HepG2 (cell line): ENCODE measurements at regions of chr9 and their contacts with region 1.

Region 1: DNA sequence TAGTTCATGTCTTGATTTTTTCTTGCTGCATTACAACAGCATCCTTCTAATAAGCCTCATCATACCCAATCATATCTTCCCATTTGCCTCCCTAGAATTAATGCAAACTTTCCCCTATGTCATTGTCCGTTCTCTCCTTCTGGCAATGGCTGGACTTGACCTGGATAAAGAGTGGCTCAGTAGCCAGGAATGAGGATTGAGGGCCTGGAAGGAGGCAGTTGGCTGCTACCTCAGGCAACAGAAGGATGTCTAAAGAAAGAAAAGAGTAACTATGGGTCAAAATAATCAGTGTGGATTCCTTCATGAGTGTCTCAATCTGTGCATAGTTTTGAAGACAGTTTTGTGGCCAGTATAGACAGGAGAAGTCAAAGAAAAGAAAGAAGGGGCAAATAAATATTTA is 209.6 kb downstream of the TRPM3 start:
- DNase-seq: no peak
- ATAC-seq: no peak
- H3K4me3 ChIP-seq: no peak overlapping the region
- H3K27ac ChIP-seq: no peak overlapping the region
- H3K4me1 ChIP-seq: no peaks in the 10 kb centered on the region
- H3K27me3 ChIP-seq: no peaks in the 10 kb centered on the region; a peak in 1 of 5 replicates
- CTCF ChIP-seq: no peak
- EP300 ChIP-seq: no peak
- POLR2A ChIP-seq: no peak
- RAD21 ChIP-seq: no peak

Region 2: GRCh38 chr9:70979966-70980365 is 68.2 kb after region 1 on chr9:
- CTCF ChIA-PET with region 1: no interaction called
- POLR2A ChIA-PET with region 1: no interaction called
- in situ Hi-C with region 1: loop called (anchors 10 kb)
- intact Hi-C with region 1: no loop called
- DNase-seq: no peak
- ATAC-seq: no peak
- H3K4me3 ChIP-seq: no peak overlapping the region
- H3K27ac ChIP-seq: no peak overlapping the region
- H3K4me1 ChIP-seq: no peaks in the 10 kb centered on the region
- H3K27me3 ChIP-seq: no peaks in the 10 kb centered on the region
- CTCF ChIP-seq: no peak
- EP300 ChIP-seq: no peak
- POLR2A ChIP-seq: no peak
- RAD21 ChIP-seq: no peak

Region 3: DNA sequence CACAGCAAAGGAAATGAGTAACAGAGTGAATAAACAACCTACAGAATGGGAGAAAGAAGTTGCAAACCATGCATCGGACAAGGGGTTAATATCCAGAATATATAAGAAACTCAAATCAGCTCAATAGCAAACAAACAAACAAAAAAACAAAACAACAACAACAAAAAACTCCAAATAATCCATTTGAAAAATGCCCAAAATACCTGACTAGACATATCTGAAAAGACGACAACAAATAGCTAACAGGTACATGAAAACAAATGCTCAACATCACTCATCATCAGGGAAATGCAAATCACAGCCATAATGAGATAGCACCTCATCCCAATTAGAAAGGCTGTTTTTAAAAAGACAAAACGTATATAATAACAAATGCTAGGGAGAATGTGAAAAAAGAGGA is 98.5 kb after region 1 on chr9:
- CTCF ChIA-PET with region 1: no interaction called
- POLR2A ChIA-PET with region 1: no interaction called
- in situ Hi-C with region 1: no loop called
- intact Hi-C with region 1: no loop called
- DNase-seq: no peak
- ATAC-seq: no peak
- H3K4me3 ChIP-seq: no peak overlapping the region
- H3K27ac ChIP-seq: no peak overlapping the region
- H3K4me1 ChIP-seq: no peaks in the 10 kb centered on the region
- H3K27me3 ChIP-seq: no peaks in the 10 kb centered on the region
- CTCF ChIP-seq: no peak
- EP300 ChIP-seq: no peak
- POLR2A ChIP-seq: no peak
- RAD21 ChIP-seq: no peak